ENCODE measurements at regions of chr10 and their contacts with region 1.

Region 1: GRCh38 chr10:25080880-25081581 is 64.6 kb downstream of the THNSL1 start:
- DNase-seq: peak; percentile 70
- H3K4me3 Mint-ChIP-seq: no peak overlapping the region
- H3K27ac Mint-ChIP-seq: no peak overlapping the region
- H3K4me1 Mint-ChIP-seq: no peaks in the 10 kb centered on the region
- H3K27me3 Mint-ChIP-seq: peaks cover 8% of the 10 kb centered on the region

Region 2: GRCh38 chr10:24642622-24643417 is 438.2 kb before region 1 on chr10:
- CTCF ChIA-PET with region 1: interaction called, 10 read pairs
- DNase-seq: no peak
- H3K4me3 Mint-ChIP-seq: no peak overlapping the region
- H3K27ac Mint-ChIP-seq: no peak overlapping the region
- H3K4me1 Mint-ChIP-seq: peaks cover 3% of the 10 kb centered on the region
- H3K27me3 Mint-ChIP-seq: no peaks in the 10 kb centered on the region

Region 3: DNA sequence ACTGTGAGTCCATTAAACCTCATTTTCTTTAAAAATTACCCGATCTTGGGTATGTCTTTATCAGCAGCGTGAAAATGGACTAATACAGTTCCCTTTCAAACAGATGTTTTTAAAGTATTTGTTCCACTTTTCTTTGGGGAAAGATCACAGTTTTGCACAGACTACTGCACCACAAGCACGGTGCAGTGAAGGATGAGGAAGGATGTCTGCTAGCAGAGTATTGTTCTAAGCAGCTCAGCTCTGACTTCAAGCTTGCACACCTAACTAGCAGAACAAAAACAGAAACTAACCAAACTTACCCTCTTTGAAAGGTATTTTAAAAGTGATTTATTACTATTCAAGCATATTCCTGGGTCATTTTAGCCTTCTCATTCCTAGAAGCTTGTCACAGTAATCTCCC is 44.6 kb before region 1 on chr10:
- CTCF ChIA-PET with region 1: no interaction called
- DNase-seq: no peak
- H3K4me3 Mint-ChIP-seq: no peak overlapping the region
- H3K27ac Mint-ChIP-seq: no peak overlapping the region
- H3K4me1 Mint-ChIP-seq: no peaks in the 10 kb centered on the region
- H3K27me3 Mint-ChIP-seq: peaks cover 12% of the 10 kb centered on the region

Measured in activated naive CD4-positive, alpha-beta T cell treated with anti-CD3 and anti-CD28 coated beads, Interleukin-2, amount 10 ng/mL, durations not matched to agents 7 days and 5 days (primary cell).